Ascending aorta (tissue), 2 donors: ENCODE measurements at regions of chr3 and their contacts with region 1.

Region 1: GRCh38 chr3:17233398-17233800 is 348.6 kb downstream of the PLCL2 start:
- DNase-seq: no peak
- H3K4me3 ChIP-seq: no peak overlapping the region
- H3K27ac ChIP-seq: no peak overlapping the region
- H3K4me1 ChIP-seq: peaks cover 0 to 3% of the 10 kb centered on the region in 2 donors
- H3K27me3 ChIP-seq: no peaks in the 10 kb centered on the region
- CTCF ChIP-seq: peak; percentile 54 to 79 (median 70)

Region 2: GRCh38 chr3:16884084-16884747 is 349.2 kb before region 1 on chr3:
- intact Hi-C with region 1: loop called (anchors 2 kb)
- DNase-seq: peak in 1 of 2 donors; percentile 75
- H3K4me3 ChIP-seq: peak overlapping the region; percentile 84 to 95
- H3K27ac ChIP-seq: peak overlapping the region; percentile 86 to 90
- H3K4me1 ChIP-seq: peaks cover 0 to 17% of the 10 kb centered on the region in 2 donors
- H3K27me3 ChIP-seq: no peaks in the 10 kb centered on the region
- CTCF ChIP-seq: peak in 2 of 3 experiments; percentile 54 to 69

Region 3: GRCh38 chr3:17032407-17033034 is 200.9 kb before region 1 on chr3:
- intact Hi-C with region 1: loop called (anchors 10 kb)
- DNase-seq: no peak
- H3K4me3 ChIP-seq: no peak overlapping the region
- H3K27ac ChIP-seq: no peak overlapping the region
- H3K4me1 ChIP-seq: no peaks in the 10 kb centered on the region
- H3K27me3 ChIP-seq: no peaks in the 10 kb centered on the region
- CTCF ChIP-seq: peak; percentile 53 to 80 (median 58)

Region 4: GRCh38 chr3:17195856-17196604 is 37.4 kb before region 1 on chr3:
- intact Hi-C with region 1: loop called (anchors 2 kb)
- DNase-seq: no peak
- H3K4me3 ChIP-seq: no peak overlapping the region
- H3K27ac ChIP-seq: peak overlapping the region; percentile 43 to 58
- H3K4me1 ChIP-seq: peaks cover 13 to 14% of the 10 kb centered on the region in 2 donors
- H3K27me3 ChIP-seq: no peaks in the 10 kb centered on the region
- CTCF ChIP-seq: peak; percentile 15 to 62 (median 32)

Region 5: DNA sequence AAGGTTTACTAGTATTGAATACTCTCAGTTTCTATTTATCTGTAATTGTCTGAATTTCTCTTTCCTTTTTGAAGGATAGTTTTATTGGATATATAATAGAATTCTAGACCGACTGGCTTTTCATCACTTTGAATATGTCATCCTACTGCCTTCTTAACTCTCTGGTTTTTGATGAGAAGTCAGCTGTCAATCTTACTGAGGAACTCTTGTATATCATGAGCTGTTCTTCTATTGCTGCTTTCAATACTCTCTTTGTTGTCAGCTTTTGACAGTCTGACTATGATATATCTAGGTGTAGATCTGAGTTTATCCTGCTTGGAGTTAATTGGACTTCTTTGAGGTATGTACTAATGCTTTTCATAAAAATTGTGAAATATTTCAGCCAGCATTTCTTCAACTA is 14.8 kb before region 1 on chr3:
- intact Hi-C with region 1: no loop called
- DNase-seq: no peak
- H3K4me3 ChIP-seq: no peak overlapping the region
- H3K27ac ChIP-seq: no peak overlapping the region
- H3K4me1 ChIP-seq: no peaks in the 10 kb centered on the region
- H3K27me3 ChIP-seq: no peaks in the 10 kb centered on the region
- CTCF ChIP-seq: no peak